G401 (cell line): ENCODE measurements at regions of chr10 and their contacts with region 1.

Region 1: GRCh38 chr10:60434418-60435046 is 44.9 kb upstream of the ANK3 start:
- DNase-seq: peak; percentile 90

Region 2: DNA sequence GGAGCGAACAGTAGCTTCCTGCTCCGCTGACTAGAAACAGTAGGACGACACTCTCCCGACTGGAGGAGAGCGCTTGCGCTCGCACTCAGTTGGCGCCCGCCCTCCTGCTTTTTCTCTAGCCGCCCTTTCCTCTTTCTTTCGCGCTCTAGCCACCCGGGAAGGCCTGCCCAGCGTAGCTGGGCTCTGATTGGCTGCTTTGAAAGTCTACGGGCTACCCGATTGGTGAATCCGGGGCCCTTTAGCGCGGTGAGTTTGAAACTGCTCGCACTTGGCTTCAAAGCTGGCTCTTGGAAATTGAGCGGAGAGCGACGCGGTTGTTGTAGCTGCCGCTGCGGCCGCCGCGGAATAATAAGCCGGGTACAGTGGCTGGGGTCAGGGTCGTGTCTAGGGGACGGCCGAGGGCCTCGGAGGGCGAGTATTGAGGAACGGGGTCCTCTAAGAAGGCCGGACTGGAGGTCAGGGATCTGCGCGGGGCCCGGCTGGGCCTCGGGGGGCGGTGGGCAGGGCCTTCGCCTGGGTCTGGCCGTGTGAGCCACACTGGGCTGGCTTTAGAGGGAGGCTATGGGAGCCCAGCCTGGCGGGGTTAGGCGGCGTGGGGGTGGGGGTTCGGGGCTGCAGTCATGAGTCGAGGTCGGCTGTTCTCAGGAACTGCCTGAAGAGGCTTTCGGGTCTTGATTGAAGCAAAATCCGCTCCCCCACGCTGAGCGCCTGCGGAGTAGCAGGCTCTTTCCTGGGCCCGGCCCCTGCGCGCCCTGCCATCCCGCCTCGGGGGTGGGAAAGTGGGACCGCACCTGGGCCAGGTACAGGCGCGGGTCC is 343.9 kb after region 1 on chr10 and contains the start of gene CDK1:
- in situ Hi-C with region 1: loop called (anchors 25 kb)
- DNase-seq: peak; percentile 98
- total RNA-seq, gene CDK1: 337 and 365 TPM in 2 replicates